K562 (cell line): ENCODE measurements at regions of chr14 and their contacts with region 1.

Region 1: DNA sequence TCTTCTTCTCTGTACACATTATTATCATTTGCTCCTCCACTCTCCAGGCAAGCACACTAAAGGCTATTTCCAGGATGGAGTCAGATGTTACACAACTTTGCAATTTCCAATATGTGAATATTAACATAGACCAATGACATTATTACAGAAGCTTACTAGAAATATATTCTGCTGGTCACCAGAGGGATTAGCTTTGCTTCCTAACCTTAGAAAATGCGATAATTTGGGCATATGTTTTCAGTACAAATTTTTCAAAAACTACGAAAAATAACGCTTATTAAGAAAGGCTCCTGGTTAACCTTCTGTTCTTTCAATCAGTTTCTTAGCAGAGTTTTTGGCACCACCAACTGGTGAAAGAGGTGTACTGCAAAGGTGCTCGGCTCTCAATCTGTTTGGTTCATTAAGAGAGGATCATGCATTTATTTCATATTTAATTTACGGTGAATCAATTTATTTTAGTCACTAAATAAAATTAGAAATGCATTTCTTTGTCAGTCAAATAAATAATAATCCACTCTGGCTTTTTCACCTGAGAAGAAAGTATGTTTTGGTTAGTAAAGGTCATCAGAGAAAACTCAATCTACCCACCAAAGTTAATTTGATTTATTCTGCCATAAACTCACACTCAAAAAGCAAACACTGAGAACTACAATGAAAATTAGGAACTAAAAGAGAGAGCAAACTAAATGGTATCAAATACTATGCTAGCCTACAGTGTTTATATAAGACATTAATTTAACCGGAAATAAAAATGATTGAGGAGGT is 39.2 kb downstream of the EFCAB11 start:
- DNase-seq: peak; percentile 32 to 56 (median 52)
- ATAC-seq: 0 out of 3 replicates have a peak, but pooled peaks have one; percentile 58
- H3K4me3 ChIP-seq: no peak overlapping the region
- H3K27ac ChIP-seq: no peak overlapping the region
- H3K4me1 ChIP-seq: no peaks in the 10 kb centered on the region
- H3K27me3 ChIP-seq: no peaks in the 10 kb centered on the region
- CTCF ChIP-seq: peak; percentile 53 to 68 (median 67); a peak in 5 of 6 replicates
- EP300 ChIP-seq: no peak
- POLR2A ChIP-seq: no peak
- RAD21 ChIP-seq: peak; percentile 70 to 73

Region 2: GRCh38 chr14:89027097-89027740 is 888.1 kb before region 1 on chr14:
- CTCF ChIA-PET with region 1: interaction called, 4 read pairs
- POLR2A ChIA-PET with region 1: no interaction called
- in situ Hi-C with region 1: no loop called
- intact Hi-C with region 1: loop called (anchors 5 kb)
- DNase-seq: peak; percentile 27 to 84 (median 78)
- ATAC-seq: peak; percentile 99
- H3K4me3 ChIP-seq: 0 out of 2 replicates have a peak overlapping the region, but pooled peaks have one; percentile 10
- H3K27ac ChIP-seq: no peak overlapping the region
- H3K4me1 ChIP-seq: peaks cover 0 to 10% of the 10 kb centered on the region in 2 experiments; a peak in 2 of 5 replicates
- H3K27me3 ChIP-seq: peaks cover 0 to 9% of the 10 kb centered on the region in 2 experiments; a peak in 3 of 5 replicates
- CTCF ChIP-seq: peak; percentile 43 to 72 (median 57); a peak in 5 of 6 replicates
- EP300 ChIP-seq: no peak
- POLR2A ChIP-seq: no peak
- RAD21 ChIP-seq: peak; percentile 30 to 55

Region 3: GRCh38 chr14:89040460-89041259 is 874.6 kb before region 1 on chr14:
- CTCF ChIA-PET with region 1: interaction called, 12 read pairs
- POLR2A ChIA-PET with region 1: no interaction called
- in situ Hi-C with region 1: loop called (anchors 5 kb)
- intact Hi-C with region 1: loop called (anchors 2 kb)
- DNase-seq: peak; percentile 51 to 66 (median 54)
- ATAC-seq: peak; percentile 92
- H3K4me3 ChIP-seq: no peak overlapping the region
- H3K27ac ChIP-seq: no peak overlapping the region
- H3K4me1 ChIP-seq: peaks cover 0 to 3% of the 10 kb centered on the region in 2 experiments; a peak in 2 of 5 replicates
- H3K27me3 ChIP-seq: no peaks in the 10 kb centered on the region
- CTCF ChIP-seq: peak; percentile 76 to 88 (median 81)
- EP300 ChIP-seq: no peak
- POLR2A ChIP-seq: no peak
- RAD21 ChIP-seq: peak; percentile 66 to 86

Region 4: GRCh38 chr14:89178802-89179535 is 736.3 kb before region 1 on chr14:
- CTCF ChIA-PET with region 1: no interaction called
- POLR2A ChIA-PET with region 1: no interaction called
- in situ Hi-C with region 1: no loop called
- intact Hi-C with region 1: loop called (anchors 2 kb)
- DNase-seq: no peak
- ATAC-seq: no peak
- H3K4me3 ChIP-seq: no peak overlapping the region
- H3K27ac ChIP-seq: no peak overlapping the region
- H3K4me1 ChIP-seq: no peaks in the 10 kb centered on the region; a peak in 1 of 5 replicates
- H3K27me3 ChIP-seq: peaks cover 2 to 27% of the 10 kb centered on the region in 2 experiments; a peak in 4 of 5 replicates
- CTCF ChIP-seq: no peak
- EP300 ChIP-seq: no peak
- POLR2A ChIP-seq: no peak
- RAD21 ChIP-seq: no peak

Region 5: DNA sequence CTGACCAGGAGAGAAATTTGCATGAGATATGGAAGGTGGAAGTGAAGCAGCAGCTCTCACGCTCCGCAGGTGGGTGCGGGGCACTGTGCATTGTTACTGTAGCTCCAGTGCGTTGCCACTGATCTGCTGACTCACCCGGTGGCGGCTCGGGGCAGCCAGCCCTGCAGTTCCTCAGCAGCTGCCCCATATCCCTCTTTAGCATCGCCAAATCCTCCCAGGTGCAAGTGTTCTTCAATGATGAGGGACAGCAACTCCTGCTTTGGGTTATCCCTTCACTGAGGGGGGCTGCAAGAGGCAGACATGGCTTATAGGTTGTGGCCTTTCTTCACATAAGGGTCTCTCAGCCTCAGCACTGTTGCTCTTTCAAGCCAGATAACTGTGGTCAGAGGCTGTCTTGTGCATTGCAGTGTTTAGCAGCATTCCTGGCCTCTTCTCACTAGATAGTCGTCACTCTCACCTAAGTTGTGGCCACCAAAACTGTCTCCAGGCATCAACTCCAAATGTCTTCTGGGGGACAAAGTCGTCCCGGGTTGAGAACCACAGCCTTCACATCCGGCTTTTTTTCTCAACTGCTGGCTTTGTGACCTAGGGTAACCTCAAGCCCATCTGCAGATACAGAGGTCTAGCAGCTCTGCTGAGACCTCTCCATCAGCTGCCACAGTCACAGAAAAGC is 141.5 kb before region 1 on chr14:
- CTCF ChIA-PET with region 1: no interaction called
- POLR2A ChIA-PET with region 1: no interaction called
- in situ Hi-C with region 1: no loop called
- intact Hi-C with region 1: loop called (anchors 10 kb)
- DNase-seq: peak in 2 of 4 experiments; percentile 6 to 12
- ATAC-seq: peak; percentile 56; the same call in 2 of the 3 replicates
- H3K4me3 ChIP-seq: no peak overlapping the region
- H3K27ac ChIP-seq: no peak overlapping the region
- H3K4me1 ChIP-seq: no peaks in the 10 kb centered on the region; a peak in 1 of 5 replicates
- H3K27me3 ChIP-seq: no peaks in the 10 kb centered on the region; a peak in 1 of 5 replicates
- CTCF ChIP-seq: no peak
- EP300 ChIP-seq: no peak
- POLR2A ChIP-seq: no peak
- RAD21 ChIP-seq: no peak

Region 6: GRCh38 chr14:89813617-89814031 is 101.7 kb before region 1 on chr14:
- CTCF ChIA-PET with region 1: no interaction called
- POLR2A ChIA-PET with region 1: no interaction called
- in situ Hi-C with region 1: no loop called
- intact Hi-C with region 1: no loop called
- DNase-seq: no peak
- ATAC-seq: no peak
- H3K4me3 ChIP-seq: no peak overlapping the region
- H3K27ac ChIP-seq: no peak overlapping the region
- H3K4me1 ChIP-seq: no peaks in the 10 kb centered on the region
- H3K27me3 ChIP-seq: no peaks in the 10 kb centered on the region
- CTCF ChIP-seq: no peak
- EP300 ChIP-seq: no peak
- POLR2A ChIP-seq: no peak
- RAD21 ChIP-seq: no peak

Region 7: GRCh38 chr14:89926717-89927116 is 11.4 kb after region 1 on chr14:
- CTCF ChIA-PET with region 1: no interaction called
- POLR2A ChIA-PET with region 1: no interaction called
- in situ Hi-C with region 1: no loop called
- intact Hi-C with region 1: no loop called
- DNase-seq: no peak
- ATAC-seq: no peak
- H3K4me3 ChIP-seq: no peak overlapping the region
- H3K27ac ChIP-seq: no peak overlapping the region
- H3K4me1 ChIP-seq: no peaks in the 10 kb centered on the region
- H3K27me3 ChIP-seq: no peaks in the 10 kb centered on the region
- CTCF ChIP-seq: no peak
- EP300 ChIP-seq: no peak
- POLR2A ChIP-seq: no peak
- RAD21 ChIP-seq: no peak